Psoas muscle (tissue), 8 donors: ENCODE measurements at regions of chr19 and their contacts with region 1.

Region 1: GRCh38 chr19:34475026-34475974 is 6.3 kb upstream of the WTIP start:
- DNase-seq: no peak
- ATAC-seq: peak in 2 of 4 donors; percentile 16 to 23
- H3K4me3 ChIP-seq: no peak overlapping the region
- H3K27ac ChIP-seq: peak overlapping the region; percentile 30
- H3K4me1 ChIP-seq: peaks cover 4% of the 10 kb centered on the region
- H3K27me3 ChIP-seq: no peaks in the 10 kb centered on the region
- CTCF ChIP-seq: no peak

Region 2: GRCh38 chr19:33343859-33344572 is 1131.3 kb before region 1 on chr19:
- intact Hi-C with region 1: loop called in 1 of 2 experiments (anchors 10 kb)
- DNase-seq: peak in 1 of 2 donors; percentile 51
- ATAC-seq: peak in 3 of 4 donors; percentile 50 to 64 (median 56)
- H3K4me3 ChIP-seq: peak overlapping the region; percentile 11
- H3K27ac ChIP-seq: no peak overlapping the region
- H3K4me1 ChIP-seq: peaks cover 2% of the 10 kb centered on the region
- H3K27me3 ChIP-seq: no peaks in the 10 kb centered on the region
- CTCF ChIP-seq: no peak

Region 3: DNA sequence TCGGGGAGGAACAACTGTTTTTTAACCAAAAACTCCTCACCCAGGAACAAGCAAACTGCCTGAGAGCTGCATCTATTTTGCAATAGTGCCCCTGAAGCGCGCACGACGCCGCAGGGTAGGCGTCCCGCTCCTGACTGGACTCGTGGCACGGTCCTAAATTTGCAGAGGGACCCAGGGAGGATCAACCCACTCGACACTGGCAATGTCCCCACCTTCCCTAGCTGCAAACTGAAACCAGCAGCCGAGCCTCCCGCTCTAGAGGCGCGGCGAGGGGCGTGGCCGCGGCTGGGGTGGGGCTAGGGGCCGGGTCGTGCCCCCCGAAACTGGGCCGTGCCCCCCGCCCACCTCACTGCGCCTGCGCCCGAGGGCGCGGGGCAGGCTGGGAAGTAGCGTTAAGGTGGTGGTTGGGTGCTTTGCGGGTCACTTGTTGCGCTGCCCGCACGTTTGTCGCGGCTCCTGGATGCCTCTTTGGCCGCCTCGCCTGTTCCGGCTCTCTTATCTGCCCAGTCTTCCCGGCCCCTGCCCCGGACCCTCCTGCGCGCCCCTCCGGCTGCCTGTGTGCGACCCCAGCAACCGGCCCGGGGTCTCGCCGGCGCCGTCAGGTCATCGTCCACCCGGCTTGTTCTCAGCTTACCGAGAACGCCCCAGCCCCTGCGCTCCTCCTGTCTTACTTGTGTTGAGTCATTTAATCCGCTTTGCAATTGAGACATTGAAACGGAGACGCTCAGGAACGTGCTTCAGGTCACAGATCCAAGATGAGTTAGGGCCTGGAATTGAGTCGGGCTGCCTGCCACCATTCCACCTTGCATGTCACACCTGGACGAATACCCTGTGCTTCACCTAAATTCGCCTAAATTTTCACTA is 340.9 kb before region 1 on chr19:
- intact Hi-C with region 1: no loop called
- DNase-seq: peak; percentile 88 to 92
- ATAC-seq: peak; percentile 96 to 98 (median 96)
- H3K4me3 ChIP-seq: peak overlapping the region; percentile 83
- H3K27ac ChIP-seq: peak overlapping the region; percentile 84
- H3K4me1 ChIP-seq: peaks cover 4% of the 10 kb centered on the region
- H3K27me3 ChIP-seq: no peaks in the 10 kb centered on the region
- CTCF ChIP-seq: no peak

Region 4: GRCh38 chr19:34416021-34416545 is 59.2 kb before region 1 on chr19:
- intact Hi-C with region 1: no loop called
- DNase-seq: no peak
- ATAC-seq: no peak
- H3K4me3 ChIP-seq: no peak overlapping the region
- H3K27ac ChIP-seq: no peak overlapping the region
- H3K4me1 ChIP-seq: no peaks in the 10 kb centered on the region
- H3K27me3 ChIP-seq: no peaks in the 10 kb centered on the region
- CTCF ChIP-seq: no peak

Region 5: GRCh38 chr19:34523408-34523807 is 48.1 kb after region 1 on chr19:
- intact Hi-C with region 1: no loop called
- DNase-seq: no peak
- ATAC-seq: no peak
- H3K4me3 ChIP-seq: no peak overlapping the region
- H3K27ac ChIP-seq: no peak overlapping the region
- H3K4me1 ChIP-seq: no peaks in the 10 kb centered on the region
- H3K27me3 ChIP-seq: peaks cover 0 to 16% (median 0%) of the 10 kb centered on the region in 3 donors
- CTCF ChIP-seq: no peak

Region 6: GRCh38 chr19:34549833-34550232 is 74.5 kb after region 1 on chr19:
- intact Hi-C with region 1: no loop called
- DNase-seq: no peak
- ATAC-seq: no peak
- H3K4me3 ChIP-seq: no peak overlapping the region
- H3K27ac ChIP-seq: no peak overlapping the region
- H3K4me1 ChIP-seq: no peaks in the 10 kb centered on the region
- H3K27me3 ChIP-seq: peaks cover 0 to 7% (median 0%) of the 10 kb centered on the region in 3 donors
- CTCF ChIP-seq: no peak